ENCODE measurements at regions of chr1 and their contacts with region 1.

Region 1: GRCh38 chr1:208093754-208094719 is 150.1 kb downstream of the PLXNA2 start:
- DNase-seq: peak; percentile 87
- ATAC-seq: peak; percentile 68

Region 2: DNA sequence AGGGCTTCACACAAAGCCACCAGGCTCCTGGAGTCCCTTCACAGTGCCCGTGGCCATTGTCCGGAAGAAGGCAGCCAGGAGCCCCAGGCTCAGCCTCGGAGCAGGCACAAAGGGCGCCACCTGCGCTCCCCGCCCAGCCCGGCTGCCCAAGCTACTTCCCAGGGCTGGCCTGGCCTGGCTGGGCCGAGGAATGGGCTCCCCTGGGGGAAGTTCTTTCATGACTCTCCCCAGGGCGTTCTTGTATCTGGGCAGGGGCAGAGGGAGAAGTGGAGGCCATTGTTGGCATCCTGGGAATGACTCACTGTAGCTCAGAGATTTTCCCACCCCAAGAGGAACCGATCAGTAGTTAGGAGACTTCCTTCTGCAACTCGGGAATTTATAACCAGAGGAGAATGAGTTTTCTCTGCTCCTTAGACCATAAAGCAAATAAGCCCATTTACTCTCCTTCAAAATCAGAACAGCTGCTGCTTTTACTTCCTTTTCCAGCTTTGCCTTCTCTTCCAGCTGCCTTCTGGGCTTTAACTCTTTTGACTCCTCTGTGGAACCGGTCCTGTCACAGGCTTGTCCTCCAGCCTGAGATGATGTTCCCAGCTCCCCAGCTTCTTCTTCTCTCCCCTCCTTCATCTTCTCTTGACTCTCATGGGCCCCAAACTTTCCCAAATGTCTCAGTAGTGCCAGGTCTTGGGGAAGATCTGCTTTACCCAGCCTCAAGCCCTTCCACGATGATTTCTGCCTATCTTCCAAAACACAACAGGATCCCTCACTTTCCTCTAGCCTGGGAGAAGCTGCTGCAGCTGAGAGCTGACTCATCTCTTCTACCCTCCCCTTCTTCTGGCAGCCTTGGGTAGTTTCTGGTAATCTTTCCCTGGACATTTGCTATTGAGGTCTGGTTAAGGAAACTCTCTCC is 64.4 kb before region 1 on chr1:
- intact Hi-C with region 1: loop called (anchors 10 kb)
- DNase-seq: no peak
- ATAC-seq: peak; percentile 75